HEK293T (cell line): ENCODE measurements at regions of chr12 and their contacts with region 1.

Region 1: GRCh38 chr12:56862264-56862663 is 71.9 kb downstream of the SDR9C7 start:
- DNase-seq: no peak

Region 2: GRCh38 chr12:56818629-56819028 is 43.6 kb before region 1 on chr12:
- CTCF ChIA-PET with region 1: interaction called, 10 read pairs
- POLR2A ChIA-PET with region 1: no interaction called
- DNase-seq: no peak

Region 3: GRCh38 chr12:57340104-57340503 is 477.8 kb after region 1 on chr12:
- CTCF ChIA-PET with region 1: no interaction called
- POLR2A ChIA-PET with region 1: no interaction called
- DNase-seq: peak; percentile 48